ENCODE measurements at regions of chr2 and their contacts with region 1.

Region 1: GRCh38 chr2:8520791-8521344 is 161.0 kb upstream of the ID2 start:
- DNase-seq: no peak
- ATAC-seq: no peak
- H3K4me3 Mint-ChIP-seq: no peak overlapping the region
- H3K27ac Mint-ChIP-seq: no peak overlapping the region
- H3K4me1 Mint-ChIP-seq: peaks cover 91% of the 10 kb centered on the region
- H3K27me3 Mint-ChIP-seq: no peaks in the 10 kb centered on the region

Region 2: DNA sequence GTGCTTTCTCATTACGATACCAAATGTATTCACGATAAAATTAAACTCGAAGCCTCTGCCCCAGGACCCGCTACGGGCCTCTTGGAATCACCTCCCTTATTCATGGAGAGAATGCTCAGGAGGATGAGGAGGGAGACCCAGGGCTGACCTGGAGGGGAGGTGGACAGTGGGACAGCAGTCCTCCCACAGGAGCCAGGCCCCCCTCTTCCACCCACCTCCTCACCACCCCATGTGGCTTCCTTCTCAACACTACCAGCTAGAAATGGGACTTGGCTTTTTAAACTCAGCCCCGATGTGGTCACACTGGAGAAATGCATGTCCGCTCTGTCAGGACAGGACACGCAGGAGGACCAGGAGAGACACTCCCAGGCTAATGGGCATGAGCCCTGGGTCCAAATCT is 13.1 kb after region 1 on chr2:
- CTCF ChIA-PET with region 1: interaction called, 15 read pairs
- POLR2A ChIA-PET with region 1: interaction called, 8 read pairs
- DNase-seq: no peak
- ATAC-seq: no peak
- H3K4me3 Mint-ChIP-seq: no peak overlapping the region
- H3K27ac Mint-ChIP-seq: no peak overlapping the region
- H3K4me1 Mint-ChIP-seq: peaks cover 45% of the 10 kb centered on the region
- H3K27me3 Mint-ChIP-seq: no peaks in the 10 kb centered on the region

Region 3: DNA sequence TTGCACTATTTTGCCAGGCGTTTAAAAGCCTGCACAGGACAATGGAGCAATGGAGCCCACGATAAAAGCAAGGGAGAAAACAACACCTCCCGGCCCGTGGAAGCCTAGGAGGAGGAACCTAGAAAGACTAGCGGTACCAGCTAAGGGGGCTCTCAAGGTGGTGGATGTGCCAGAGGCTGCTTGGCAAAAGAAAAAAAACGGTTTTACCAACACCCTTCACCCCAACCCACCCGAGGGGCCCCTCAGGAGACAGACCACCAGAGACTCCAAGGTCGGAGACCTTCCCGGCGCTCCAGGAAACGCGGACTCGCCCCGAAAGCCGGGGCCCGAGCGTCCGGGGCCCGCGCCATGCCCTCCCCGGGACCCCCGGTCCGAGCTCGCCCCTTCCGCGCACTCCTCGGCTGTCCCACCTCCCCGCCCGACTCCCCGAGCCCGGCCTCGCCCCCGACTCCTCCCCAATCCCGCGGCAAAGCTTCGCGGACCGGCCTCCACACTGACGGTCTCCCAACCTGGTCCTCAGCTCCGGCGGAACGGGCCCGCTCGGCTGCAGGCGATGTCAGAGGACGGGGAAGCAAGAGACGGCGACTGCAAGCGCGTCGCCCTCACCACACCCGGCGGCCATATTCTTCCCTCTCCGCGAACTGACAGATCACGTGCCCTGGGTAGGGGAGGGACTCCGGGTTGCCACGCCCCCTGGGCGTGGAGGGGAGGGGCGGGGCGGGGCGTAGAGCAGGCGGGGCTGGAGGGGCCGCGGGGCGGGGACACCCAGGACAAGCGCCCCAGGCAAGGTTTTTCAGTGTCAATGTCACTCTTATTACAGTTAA is 316.3 kb after region 1 on chr2 and contains the start of gene KIDINS220:
- CTCF ChIA-PET with region 1: no interaction called
- POLR2A ChIA-PET with region 1: no interaction called
- DNase-seq: peak; percentile 87
- ATAC-seq: peak; percentile 93
- H3K4me3 Mint-ChIP-seq: peak within 1 kb of the TSS; percentile 99
- H3K27ac Mint-ChIP-seq: peak within 1 kb of the TSS; percentile 99
- H3K4me1 Mint-ChIP-seq: peaks cover 21% of the 10 kb centered on the region
- H3K27me3 Mint-ChIP-seq: peaks cover 4% of the 10 kb centered on the region
- total RNA-seq, gene KIDINS220: 27.2 to 30.0 TPM